Activated CD4-positive, alpha-beta T cell treated with anti-CD3 and anti-CD28 coated beads, Interleukin-2, amount 10 ng/mL, durations not matched to agents 7 days and 5 days (primary cell): ENCODE measurements at regions of chr2 and their contacts with region 1.

Region 1: DNA sequence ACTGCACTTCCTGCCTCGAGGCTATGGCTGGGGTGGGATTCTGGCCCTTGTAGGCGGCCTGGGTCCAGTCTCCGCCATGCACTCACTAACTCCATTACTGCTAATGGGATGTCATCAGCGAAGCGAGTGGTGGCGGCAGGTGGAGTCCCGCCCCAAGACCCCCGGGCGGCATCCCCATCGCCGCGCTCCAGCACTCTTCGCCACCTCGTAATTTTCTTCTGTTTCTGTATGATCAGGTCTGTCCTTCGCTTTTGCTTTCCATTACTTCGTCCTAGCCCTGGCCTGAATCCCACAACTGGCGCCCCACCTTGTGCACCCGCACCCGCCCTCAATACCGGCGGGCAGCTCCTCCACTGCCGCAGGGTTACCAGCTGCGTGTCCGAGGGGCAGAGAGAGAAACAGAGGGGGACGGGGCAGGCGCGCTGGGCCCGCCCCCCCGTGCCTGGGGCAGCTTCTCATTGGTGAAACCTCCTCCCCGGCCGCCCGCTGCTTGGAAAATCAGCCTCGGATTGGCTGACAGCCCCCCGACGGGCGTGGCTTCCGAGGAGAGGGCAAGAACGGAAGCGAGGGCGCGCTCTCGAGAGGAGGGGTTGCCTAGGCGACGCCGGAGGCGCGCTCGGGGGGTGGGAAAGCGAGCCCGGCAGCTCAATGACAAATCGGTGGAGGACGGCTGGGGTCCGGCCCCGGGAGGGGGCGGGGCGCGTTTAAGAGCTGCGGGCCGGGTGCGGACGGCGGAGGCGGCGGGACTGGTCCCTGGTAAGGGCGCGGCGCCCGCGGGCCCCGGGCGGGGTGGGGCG is at the start of gene RALB:
- DNase-seq: peak; percentile 99
- H3K4me3 Mint-ChIP-seq: peak within 1 kb of the TSS; percentile 99
- H3K27ac Mint-ChIP-seq: peak within 1 kb of the TSS; percentile 95
- H3K4me1 Mint-ChIP-seq: peaks cover 67% of the 10 kb centered on the region
- H3K27me3 Mint-ChIP-seq: peaks cover 13% of the 10 kb centered on the region
- total RNA-seq, gene RALB: 44.3 to 46.8 TPM

Region 2: GRCh38 chr2:120231974-120232635 is 20.3 kb before region 1 on chr2:
- CTCF ChIA-PET with region 1: interaction called, 51 read pairs
- POLR2A ChIA-PET with region 1: interaction called, 11 read pairs
- DNase-seq: peak; percentile 90
- H3K4me3 Mint-ChIP-seq: peak overlapping the region; percentile 96
- H3K27ac Mint-ChIP-seq: peak overlapping the region; percentile 99
- H3K4me1 Mint-ChIP-seq: peaks cover 53% of the 10 kb centered on the region
- H3K27me3 Mint-ChIP-seq: no peaks in the 10 kb centered on the region

Region 3: DNA sequence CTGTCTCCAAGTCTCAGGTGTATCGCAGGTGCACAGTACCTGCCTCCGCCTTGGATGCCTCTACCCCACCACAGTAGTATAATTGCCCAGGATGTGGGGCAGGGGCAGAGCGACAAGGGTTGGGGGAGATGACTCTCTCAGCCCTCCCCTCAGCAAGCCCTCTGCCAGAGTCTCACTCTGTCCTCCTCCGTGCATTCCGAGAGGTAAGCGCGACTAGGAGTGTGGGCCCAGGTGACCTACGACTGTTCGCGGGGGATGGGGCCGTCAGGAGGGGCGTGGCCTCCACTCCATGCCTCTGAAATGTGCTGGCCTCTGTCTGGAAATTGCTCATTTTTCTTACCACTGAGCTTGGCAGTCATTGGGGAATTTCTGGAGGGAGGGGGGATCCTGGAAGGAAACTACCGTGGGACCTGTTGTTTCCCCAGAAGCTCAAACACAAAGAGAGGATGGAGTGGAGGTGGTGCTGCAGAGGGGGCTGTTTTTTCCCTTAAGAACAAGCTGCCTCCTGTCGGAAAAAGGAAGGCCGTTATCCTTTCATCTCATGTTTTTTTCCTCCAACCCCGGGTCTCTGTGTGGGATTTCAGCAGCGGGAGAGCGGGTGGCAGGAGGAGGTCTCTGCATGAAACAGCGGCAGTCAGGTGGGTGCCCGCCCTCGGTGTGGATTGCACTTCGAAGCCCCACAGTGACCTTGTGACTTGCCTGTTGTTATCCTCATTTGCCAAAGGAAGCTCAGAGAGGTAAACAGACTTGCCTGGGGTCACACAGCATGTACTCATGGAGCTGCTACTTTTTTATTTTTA is 12.7 kb before region 1 on chr2:
- CTCF ChIA-PET with region 1: interaction called, 51 read pairs
- POLR2A ChIA-PET with region 1: no interaction called
- DNase-seq: no peak
- H3K4me3 Mint-ChIP-seq: no peak overlapping the region
- H3K27ac Mint-ChIP-seq: no peak overlapping the region
- H3K4me1 Mint-ChIP-seq: peaks cover 17% of the 10 kb centered on the region
- H3K27me3 Mint-ChIP-seq: no peaks in the 10 kb centered on the region

Region 4: DNA sequence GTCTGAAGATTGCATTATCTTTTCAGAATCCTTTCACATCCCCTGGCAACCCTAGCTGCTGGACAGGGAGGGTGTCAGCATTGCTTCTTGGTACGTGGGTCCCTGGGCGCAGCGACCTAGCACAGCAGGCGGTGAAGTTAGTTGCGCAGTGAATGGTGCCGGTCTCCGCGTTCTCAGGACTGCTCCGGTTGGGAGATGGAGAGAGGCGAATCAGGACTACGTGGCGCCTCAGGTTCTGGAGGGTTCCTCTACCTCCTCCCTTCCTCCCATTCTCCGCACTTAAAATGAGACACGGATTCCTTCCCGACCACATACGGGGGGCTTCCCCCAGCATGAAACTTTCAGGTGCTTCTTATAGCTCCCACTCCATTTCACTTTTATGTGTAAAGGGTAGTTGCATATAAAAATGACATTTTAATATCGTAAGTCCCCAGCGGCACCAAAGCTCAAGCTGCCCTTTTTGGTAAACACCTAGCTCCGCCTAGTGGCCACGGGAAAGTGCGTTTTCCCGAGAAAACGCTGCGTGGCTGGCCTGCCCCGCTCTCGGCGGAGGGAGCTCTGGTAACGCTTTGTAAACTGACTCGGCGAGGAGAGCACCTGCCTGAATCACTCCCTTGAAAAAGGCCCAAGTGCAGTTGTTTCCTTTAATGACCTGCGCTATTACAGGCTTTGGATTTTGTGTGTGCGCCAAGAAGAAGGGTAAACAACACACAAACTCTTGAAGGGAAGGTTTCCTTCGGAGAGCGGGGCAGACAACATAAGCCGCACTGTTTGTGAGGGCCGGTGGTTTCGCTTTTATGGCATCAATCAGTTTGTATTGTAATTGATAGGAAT is 60.7 kb after region 1 on chr2:
- CTCF ChIA-PET with region 1: interaction called, 14 read pairs
- POLR2A ChIA-PET with region 1: no interaction called
- DNase-seq: peak; percentile 85
- H3K4me3 Mint-ChIP-seq: peak overlapping the region; percentile 65
- H3K27ac Mint-ChIP-seq: peak overlapping the region; percentile 64
- H3K4me1 Mint-ChIP-seq: peaks cover 52% of the 10 kb centered on the region
- H3K27me3 Mint-ChIP-seq: no peaks in the 10 kb centered on the region

Region 5: GRCh38 chr2:120758181-120759144 is 506.0 kb after region 1 on chr2:
- CTCF ChIA-PET with region 1: no interaction called
- POLR2A ChIA-PET with region 1: no interaction called
- DNase-seq: no peak
- H3K4me3 Mint-ChIP-seq: no peak overlapping the region
- H3K27ac Mint-ChIP-seq: no peak overlapping the region
- H3K4me1 Mint-ChIP-seq: no peaks in the 10 kb centered on the region
- H3K27me3 Mint-ChIP-seq: peaks cover 11% of the 10 kb centered on the region